ENCODE measurements at regions of chr10 and their contacts with region 1.

Region 1: DNA sequence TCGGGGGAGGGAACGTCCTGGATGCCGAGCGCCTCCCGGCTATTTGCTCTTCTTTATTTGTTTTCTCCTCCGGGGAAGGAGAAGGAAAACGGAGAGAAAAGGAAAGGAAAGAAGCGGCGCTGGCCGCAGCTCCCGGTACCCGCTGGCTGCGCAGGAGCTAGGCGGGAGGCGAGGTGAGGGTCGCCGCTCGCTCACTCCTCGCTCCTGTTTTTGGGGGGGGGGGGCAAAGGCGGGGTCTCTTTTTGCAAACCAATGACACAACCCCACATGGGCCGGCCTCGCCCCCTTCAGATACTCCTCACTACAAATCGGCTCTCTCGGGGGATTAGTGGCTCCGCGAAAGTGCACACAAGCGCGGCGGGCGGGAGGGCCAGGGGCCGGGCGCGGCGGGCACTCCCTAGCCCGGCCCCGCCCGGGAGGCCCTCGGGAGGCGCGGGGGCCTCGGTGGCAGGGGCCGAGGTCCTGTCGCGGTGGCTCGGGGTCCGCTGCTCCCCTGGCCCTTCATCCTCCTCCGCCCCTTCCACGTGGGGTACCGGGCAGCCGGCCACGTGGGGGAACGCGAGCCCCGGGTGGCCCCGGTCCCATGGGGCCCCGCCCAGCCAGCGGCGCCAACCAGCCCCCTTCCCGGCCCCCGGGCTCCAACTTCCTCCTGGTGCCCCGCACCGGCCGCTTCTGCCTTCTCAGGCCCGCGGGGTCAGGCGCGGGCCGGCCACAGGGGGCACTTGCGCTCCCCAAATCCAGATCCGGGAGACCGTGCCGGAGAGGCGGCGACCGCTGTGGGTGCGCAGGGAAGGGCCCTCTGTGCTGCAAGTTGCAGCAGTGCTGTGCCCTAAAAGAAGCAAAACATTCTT is 718 bp upstream of the CTBP2 start:
- DNase-seq: peak; percentile 83 to 89
- ATAC-seq: peak; percentile 66 to 80 (median 80)
- H3K4me3 ChIP-seq: peak overlapping the region; percentile 93
- H3K27ac ChIP-seq: peak overlapping the region; percentile 98
- H3K4me1 ChIP-seq: peaks cover 23% of the 10 kb centered on the region
- H3K27me3 ChIP-seq: no peaks in the 10 kb centered on the region
- CTCF ChIP-seq: peak; percentile 52

Region 2: GRCh38 chr10:124416733-124417132 is 744.3 kb before region 1 on chr10:
- intact Hi-C with region 1: no loop called
- DNase-seq: no peak
- ATAC-seq: no peak
- H3K4me3 ChIP-seq: peak overlapping the region; percentile 90
- H3K27ac ChIP-seq: peak overlapping the region; percentile 92
- H3K4me1 ChIP-seq: peaks cover 29% of the 10 kb centered on the region
- H3K27me3 ChIP-seq: no peaks in the 10 kb centered on the region
- CTCF ChIP-seq: no peak

Region 3: DNA sequence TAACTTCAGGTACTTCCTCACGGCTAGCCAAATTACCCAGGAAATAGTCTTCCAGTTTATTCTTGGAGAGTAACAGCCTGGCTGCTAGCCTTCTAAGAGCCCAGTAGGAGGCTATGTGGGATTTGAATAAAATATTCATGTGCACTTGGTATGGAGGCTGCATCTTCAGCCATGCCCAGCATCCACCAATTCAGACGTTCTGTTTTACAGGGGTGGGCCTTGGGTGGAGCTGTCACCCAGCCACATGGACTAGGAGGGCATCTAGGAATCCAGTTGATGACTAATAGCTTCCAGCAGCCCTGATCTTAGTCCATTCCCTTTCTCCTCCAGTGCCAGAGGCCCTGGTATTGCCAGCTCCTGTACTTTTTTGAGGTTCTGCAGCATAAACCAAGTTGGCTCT is 285.5 kb before region 1 on chr10:
- intact Hi-C with region 1: no loop called
- DNase-seq: no peak
- ATAC-seq: peak in 1 of 4 donors; percentile 37
- H3K4me3 ChIP-seq: no peak overlapping the region
- H3K27ac ChIP-seq: no peak overlapping the region
- H3K4me1 ChIP-seq: no peaks in the 10 kb centered on the region
- H3K27me3 ChIP-seq: no peaks in the 10 kb centered on the region
- CTCF ChIP-seq: no peak

Region 4: GRCh38 chr10:125060826-125061556 is 100.1 kb before region 1 on chr10:
- intact Hi-C with region 1: loop called in 1 of 2 experiments (anchors 5 kb)
- DNase-seq: peak; percentile 84 to 90
- ATAC-seq: peak; percentile 67 to 77 (median 70)
- H3K4me3 ChIP-seq: peak overlapping the region; percentile 39
- H3K27ac ChIP-seq: peak overlapping the region; percentile 80
- H3K4me1 ChIP-seq: peaks cover 99% of the 10 kb centered on the region
- H3K27me3 ChIP-seq: no peaks in the 10 kb centered on the region
- CTCF ChIP-seq: peak; percentile 86

Region 5: DNA sequence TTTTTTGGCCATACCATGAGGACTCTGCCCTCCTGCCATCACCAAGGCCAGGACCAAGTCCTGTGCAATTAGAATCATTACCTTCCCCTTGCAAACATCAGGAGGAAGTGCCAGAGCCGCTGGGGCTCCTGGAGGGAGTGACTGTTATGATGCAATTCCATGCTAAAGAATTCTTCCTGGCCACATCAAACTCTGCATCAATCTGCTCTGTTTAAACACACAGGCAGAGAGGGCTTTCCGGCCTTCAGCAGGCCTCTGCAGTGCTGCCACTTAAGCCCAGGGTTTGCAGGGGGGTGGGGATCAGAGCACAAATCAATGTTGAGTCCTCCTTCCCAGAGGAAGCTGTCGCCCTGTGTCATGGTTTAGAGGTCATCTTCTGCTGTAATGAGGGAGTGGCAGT is 58.9 kb before region 1 on chr10:
- intact Hi-C with region 1: no loop called
- DNase-seq: peak in 1 of 2 donors; percentile 32
- ATAC-seq: peak in 2 of 4 donors; percentile 14 to 15
- H3K4me3 ChIP-seq: no peak overlapping the region
- H3K27ac ChIP-seq: no peak overlapping the region
- H3K4me1 ChIP-seq: peaks cover 59% of the 10 kb centered on the region
- H3K27me3 ChIP-seq: no peaks in the 10 kb centered on the region
- CTCF ChIP-seq: no peak

Region 6: DNA sequence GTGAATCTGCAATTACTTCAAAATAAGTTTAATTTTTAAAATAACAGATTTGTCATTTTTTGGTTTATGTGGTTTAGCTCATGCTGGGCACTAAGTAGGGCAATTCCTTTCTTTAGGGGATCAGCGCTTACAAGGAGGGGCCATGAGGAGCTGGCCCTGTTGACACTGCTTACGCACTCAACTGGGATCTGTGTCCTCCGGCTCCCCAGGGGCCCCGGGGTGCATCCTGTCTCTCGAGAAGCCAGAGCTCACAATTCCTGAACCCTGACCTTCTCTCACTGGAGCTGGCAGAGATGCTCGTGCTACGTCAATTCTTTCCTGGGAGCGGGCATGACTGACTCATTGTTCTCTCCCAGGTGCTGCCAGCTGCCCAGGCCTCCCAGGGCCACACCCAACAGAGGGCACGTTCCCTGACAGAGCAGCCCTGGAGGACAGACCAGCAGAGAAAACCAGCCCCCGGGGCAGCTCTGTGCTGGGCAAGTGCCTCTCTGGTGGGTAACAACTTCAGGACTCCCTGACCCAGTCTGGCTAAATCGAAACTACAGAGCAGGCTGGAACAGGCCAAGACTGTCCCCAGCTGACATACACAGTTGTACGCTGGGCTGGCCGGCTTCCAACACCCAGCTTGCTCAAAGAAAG is 37.5 kb before region 1 on chr10:
- intact Hi-C with region 1: loop called (anchors 1 to 5 kb)
- DNase-seq: peak; percentile 84 to 93
- ATAC-seq: peak; percentile 71 to 85 (median 78)
- H3K4me3 ChIP-seq: peak overlapping the region; percentile 61
- H3K27ac ChIP-seq: peak overlapping the region; percentile 98
- H3K4me1 ChIP-seq: peaks cover 93% of the 10 kb centered on the region
- H3K27me3 ChIP-seq: no peaks in the 10 kb centered on the region
- CTCF ChIP-seq: no peak

Region 7: GRCh38 chr10:125343118-125343925 is 182.2 kb after region 1 on chr10:
- intact Hi-C with region 1: loop called (anchors 2 to 10 kb)
- DNase-seq: no peak
- ATAC-seq: peak in 2 of 4 donors; percentile 51 to 60
- H3K4me3 ChIP-seq: no peak overlapping the region
- H3K27ac ChIP-seq: no peak overlapping the region
- H3K4me1 ChIP-seq: no peaks in the 10 kb centered on the region
- H3K27me3 ChIP-seq: no peaks in the 10 kb centered on the region
- CTCF ChIP-seq: peak; percentile 70

Region 8: GRCh38 chr10:125709553-125710474 is 548.7 kb after region 1 on chr10:
- intact Hi-C with region 1: loop called (anchors 5 kb)
- DNase-seq: no peak
- ATAC-seq: no peak
- H3K4me3 ChIP-seq: no peak overlapping the region
- H3K27ac ChIP-seq: no peak overlapping the region
- H3K4me1 ChIP-seq: no peaks in the 10 kb centered on the region
- H3K27me3 ChIP-seq: no peaks in the 10 kb centered on the region
- CTCF ChIP-seq: no peak

Region 9: DNA sequence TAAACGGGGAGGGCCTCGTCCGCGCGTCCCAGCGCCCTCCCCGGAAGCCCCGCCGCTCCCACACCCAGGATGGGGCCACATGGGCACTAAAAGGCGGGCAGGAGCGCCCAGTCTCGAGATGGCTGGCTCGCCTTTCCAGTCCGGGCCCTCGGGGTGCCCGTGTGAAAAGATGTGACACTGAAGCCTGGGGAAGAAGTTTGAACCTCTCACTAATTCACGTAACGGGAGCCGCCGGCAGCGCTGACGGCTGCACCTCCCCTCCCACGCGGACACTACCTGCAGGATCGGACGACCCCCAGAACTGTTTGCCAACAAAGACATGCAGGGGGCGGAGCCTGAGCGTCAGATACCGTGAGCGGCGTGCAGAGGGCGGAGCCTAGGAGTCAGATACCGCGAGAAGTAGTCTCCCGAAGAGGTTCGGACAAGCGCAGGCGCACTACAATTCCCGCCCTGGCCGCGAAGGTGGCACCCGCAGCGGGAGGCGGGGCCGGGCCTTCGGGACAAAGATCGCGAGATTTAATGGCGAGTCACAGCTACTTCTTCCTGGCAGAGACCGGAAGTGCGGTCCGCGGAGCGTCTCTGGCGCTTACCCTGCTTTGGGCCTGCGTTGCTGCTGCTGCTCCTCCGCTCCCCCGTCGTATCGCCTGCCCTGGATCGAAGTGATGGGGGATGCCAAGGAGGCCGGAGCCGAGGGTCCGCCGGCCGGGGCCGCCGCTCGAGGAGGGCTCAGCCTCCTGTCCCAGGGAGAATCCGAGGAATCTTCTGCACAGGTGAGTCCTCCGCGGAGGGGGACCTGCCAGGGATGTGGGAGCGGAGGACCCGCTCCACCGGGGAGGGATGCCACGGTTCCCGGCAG is 558.3 kb after region 1 on chr10 and contains the start of gene EDRF1:
- intact Hi-C with region 1: loop called (anchors 5 kb)
- DNase-seq: peak; percentile 99 to 100
- ATAC-seq: peak; percentile 100
- H3K4me3 ChIP-seq: peak within 1 kb of the TSS; percentile 92
- H3K27ac ChIP-seq: peak within 1 kb of the TSS; percentile 85
- H3K4me1 ChIP-seq: peaks cover 11% of the 10 kb centered on the region
- H3K27me3 ChIP-seq: no peaks in the 10 kb centered on the region
- CTCF ChIP-seq: no peak
- total RNA-seq, gene EDRF1: 7.6 to 13.8 (median 10.6) TPM

Region 10: GRCh38 chr10:125982260-125982948 is 821.3 kb after region 1 on chr10:
- intact Hi-C with region 1: no loop called
- DNase-seq: no peak
- ATAC-seq: peak in 1 of 4 donors; percentile 46
- H3K4me3 ChIP-seq: no peak overlapping the region
- H3K27ac ChIP-seq: no peak overlapping the region
- H3K4me1 ChIP-seq: no peaks in the 10 kb centered on the region
- H3K27me3 ChIP-seq: no peaks in the 10 kb centered on the region
- CTCF ChIP-seq: peak; percentile 62

Measured in psoas muscle (tissue), 8 donors.